Thyroid gland (tissue), 4 donors: ENCODE measurements at regions of chr10 and their contacts with region 1.

Region 1: GRCh38 chr10:102835007-102835482 is 2.2 kb downstream of the CYP17A1 start:
- DNase-seq: peak; percentile 83 to 85
- H3K4me3 ChIP-seq: no peak overlapping the region
- H3K27ac ChIP-seq: peak overlapping the region; percentile 17 to 91 (median 89)
- H3K4me1 ChIP-seq: peaks cover 26 to 30% of the 10 kb centered on the region in 2 donors
- H3K27me3 ChIP-seq: no peaks in the 10 kb centered on the region
- CTCF ChIP-seq: peak; percentile 69 to 95 (median 86)
- POLR2A ChIP-seq: no peak

Region 2: DNA sequence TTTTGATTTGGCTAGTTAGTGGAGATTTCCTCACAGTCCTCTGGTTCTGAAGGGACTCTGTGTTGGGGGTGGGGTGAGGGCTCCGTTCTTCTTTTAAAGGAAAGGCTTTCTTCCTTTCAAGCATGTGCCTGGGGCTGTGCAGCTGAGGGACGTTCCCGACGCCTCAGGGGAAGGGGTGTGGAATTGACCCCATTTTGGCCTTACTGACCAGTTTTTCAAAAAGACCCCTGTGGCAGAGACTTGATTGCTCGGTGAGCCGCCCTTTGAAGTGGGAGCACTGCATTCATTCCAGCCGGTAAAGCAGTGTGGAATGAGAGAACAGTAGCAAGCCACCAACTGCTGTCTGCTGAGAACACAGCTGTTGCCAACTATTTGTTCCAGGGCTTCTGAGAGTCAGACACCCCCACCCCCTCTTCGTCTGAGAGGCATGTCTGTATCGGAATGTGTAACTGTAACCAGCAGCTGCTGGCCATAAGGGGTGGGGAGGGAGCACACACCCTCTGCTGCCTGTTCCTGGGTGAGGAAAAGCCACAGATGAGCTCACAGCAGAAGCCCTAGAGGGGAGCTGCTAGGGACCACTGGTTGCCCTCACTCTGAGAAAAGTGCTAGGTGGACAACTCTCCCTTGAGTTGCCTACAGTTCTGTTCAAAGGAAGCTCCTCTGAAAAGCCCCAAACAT is 58.1 kb before region 1 on chr10:
- intact Hi-C with region 1: no loop called
- DNase-seq: peak; percentile 97
- H3K4me3 ChIP-seq: peak overlapping the region in 1 of 3 donors; percentile 21
- H3K27ac ChIP-seq: peak overlapping the region; percentile 96 to 99 (median 98)
- H3K4me1 ChIP-seq: peaks cover 91 to 94% of the 10 kb centered on the region in 2 donors
- H3K27me3 ChIP-seq: no peaks in the 10 kb centered on the region
- CTCF ChIP-seq: peak in 1 of 6 experiments; percentile 16
- POLR2A ChIP-seq: peak in 1 of 2 donors; percentile 65

Region 3: DNA sequence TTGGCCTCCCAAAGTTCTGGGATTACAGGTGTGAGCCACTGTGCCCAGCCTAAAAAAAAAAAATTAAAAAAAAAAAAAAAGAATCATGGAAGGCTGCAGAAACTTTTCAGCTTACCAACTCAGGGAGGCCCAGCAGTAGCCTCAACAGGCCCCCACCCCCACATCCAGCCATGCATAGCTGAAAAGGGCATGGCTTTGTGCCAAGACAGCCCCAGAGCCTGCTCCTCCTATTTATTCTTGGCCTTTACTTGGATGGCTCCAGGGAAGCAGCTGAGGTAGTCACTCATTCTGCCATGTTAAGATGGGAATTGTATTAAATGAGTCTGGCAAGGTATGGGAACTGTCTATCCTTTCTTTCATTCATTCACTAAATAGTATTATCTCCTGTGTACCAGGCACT is 69.3 kb after region 1 on chr10:
- intact Hi-C with region 1: loop called (anchors 2 kb)
- DNase-seq: peak; percentile 51 to 57
- H3K4me3 ChIP-seq: no peak overlapping the region
- H3K27ac ChIP-seq: no peak overlapping the region
- H3K4me1 ChIP-seq: peaks cover 0 to 3% of the 10 kb centered on the region in 2 donors
- H3K27me3 ChIP-seq: no peaks in the 10 kb centered on the region
- CTCF ChIP-seq: no peak
- POLR2A ChIP-seq: no peak